ENCODE measurements at regions of chr4 and their contacts with region 1.

Region 1: DNA sequence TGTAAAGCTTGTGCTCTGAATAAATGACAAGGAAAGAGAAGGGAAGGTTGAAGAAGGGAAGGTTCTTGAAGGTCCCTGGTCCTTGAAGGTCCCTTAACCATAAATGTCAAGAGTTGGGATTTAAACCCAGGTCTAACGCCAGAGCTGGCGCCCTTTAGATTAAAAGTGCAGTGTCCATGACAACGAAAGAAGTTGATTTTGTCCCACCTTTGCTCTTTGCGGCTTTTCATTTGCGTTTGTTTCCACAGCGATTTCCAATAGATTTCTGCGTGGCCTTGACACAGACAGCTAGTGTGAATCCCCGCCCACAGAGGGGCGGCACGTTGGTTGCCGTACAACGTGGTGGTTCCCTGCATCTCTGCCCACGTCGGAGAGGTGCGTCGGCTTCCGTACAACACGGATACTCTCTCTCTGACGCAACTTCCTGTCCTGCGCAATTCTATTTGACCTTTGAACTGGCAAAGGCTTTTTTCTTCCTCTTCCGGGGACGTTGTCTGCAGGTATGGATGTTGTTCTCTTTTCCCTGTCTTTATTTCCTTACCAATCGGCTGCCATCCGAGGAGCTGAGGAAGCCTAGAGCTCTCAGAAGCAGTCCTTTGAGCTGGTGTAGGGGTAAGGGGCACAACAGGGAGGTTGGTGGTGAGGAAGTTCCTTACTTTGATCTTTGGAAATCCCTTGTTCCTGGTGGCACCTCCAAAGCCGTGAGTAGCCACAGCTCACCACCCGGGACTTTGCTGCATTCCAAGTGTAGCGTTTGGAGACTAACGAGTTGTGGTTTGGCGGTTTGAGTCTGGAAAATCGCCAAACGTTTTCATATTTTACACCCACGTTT is at the start of gene RPL34:
- H3K4me3 Mint-ChIP-seq: peak within 1 kb of the TSS; percentile 91
- H3K27ac Mint-ChIP-seq: peak within 1 kb of the TSS; percentile 95
- H3K4me1 Mint-ChIP-seq: peaks cover 39% of the 10 kb centered on the region
- H3K27me3 Mint-ChIP-seq: no peaks in the 10 kb centered on the region

Region 2: DNA sequence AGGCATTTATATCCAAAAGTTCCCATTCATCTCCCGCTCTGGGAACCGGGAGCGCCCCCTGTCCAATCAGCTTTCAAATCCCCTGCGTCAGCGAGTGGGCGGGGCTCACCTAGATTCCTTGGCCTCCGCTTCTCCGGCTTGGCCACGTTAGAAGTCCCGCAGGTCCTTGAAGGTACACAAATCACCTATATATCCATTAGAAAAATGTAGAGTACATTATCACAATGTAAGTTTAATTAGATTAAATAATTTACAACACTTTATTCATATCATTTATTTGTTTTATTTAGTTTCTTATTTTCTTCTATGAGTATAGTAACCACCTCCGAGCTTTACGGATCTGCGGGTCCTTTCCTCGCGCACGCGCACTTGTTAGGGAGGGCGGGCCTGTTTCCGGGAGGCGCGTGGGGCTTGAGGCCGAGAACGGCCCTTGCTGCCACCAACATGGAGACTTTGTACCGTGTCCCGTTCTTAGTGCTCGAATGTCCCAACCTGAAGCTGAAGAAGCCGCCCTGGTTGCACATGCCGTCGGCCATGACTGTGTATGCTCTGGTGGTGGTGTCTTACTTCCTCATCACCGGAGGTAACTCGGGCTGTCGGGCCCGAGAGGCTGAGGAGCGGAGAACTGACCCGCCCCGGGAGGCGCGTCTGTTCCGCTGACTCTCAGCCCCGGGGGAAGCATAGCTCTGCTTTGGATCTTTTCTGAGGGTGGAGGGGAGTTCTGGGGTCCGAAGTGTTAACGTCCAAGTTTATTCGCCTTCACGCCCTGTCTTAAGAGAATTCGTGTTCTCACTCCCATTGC is 30.1 kb after region 1 on chr4 and contains the start of gene OSTC:
- intact Hi-C with region 1: loop called (anchors 1 kb)
- H3K4me3 Mint-ChIP-seq: peak within 1 kb of the TSS; percentile 93
- H3K27ac Mint-ChIP-seq: peak within 1 kb of the TSS; percentile 96
- H3K4me1 Mint-ChIP-seq: peaks cover 27% of the 10 kb centered on the region
- H3K27me3 Mint-ChIP-seq: no peaks in the 10 kb centered on the region

Region 3: GRCh38 chr4:108751321-108751720 is 131.0 kb after region 1 on chr4:
- intact Hi-C with region 1: no loop called
- H3K4me3 Mint-ChIP-seq: no peak overlapping the region
- H3K27ac Mint-ChIP-seq: no peak overlapping the region
- H3K4me1 Mint-ChIP-seq: no peaks in the 10 kb centered on the region
- H3K27me3 Mint-ChIP-seq: peaks cover 5% of the 10 kb centered on the region

Region 4: GRCh38 chr4:108796173-108796572 is 175.9 kb after region 1 on chr4:
- intact Hi-C with region 1: no loop called
- H3K4me3 Mint-ChIP-seq: no peak overlapping the region
- H3K27ac Mint-ChIP-seq: no peak overlapping the region
- H3K4me1 Mint-ChIP-seq: no peaks in the 10 kb centered on the region
- H3K27me3 Mint-ChIP-seq: peaks cover 2% of the 10 kb centered on the region

Region 5: GRCh38 chr4:108840426-108840975 is 220.2 kb after region 1 on chr4:
- intact Hi-C with region 1: no loop called
- H3K4me3 Mint-ChIP-seq: no peak overlapping the region
- H3K27ac Mint-ChIP-seq: no peak overlapping the region
- H3K4me1 Mint-ChIP-seq: no peaks in the 10 kb centered on the region
- H3K27me3 Mint-ChIP-seq: no peaks in the 10 kb centered on the region

Region 6: DNA sequence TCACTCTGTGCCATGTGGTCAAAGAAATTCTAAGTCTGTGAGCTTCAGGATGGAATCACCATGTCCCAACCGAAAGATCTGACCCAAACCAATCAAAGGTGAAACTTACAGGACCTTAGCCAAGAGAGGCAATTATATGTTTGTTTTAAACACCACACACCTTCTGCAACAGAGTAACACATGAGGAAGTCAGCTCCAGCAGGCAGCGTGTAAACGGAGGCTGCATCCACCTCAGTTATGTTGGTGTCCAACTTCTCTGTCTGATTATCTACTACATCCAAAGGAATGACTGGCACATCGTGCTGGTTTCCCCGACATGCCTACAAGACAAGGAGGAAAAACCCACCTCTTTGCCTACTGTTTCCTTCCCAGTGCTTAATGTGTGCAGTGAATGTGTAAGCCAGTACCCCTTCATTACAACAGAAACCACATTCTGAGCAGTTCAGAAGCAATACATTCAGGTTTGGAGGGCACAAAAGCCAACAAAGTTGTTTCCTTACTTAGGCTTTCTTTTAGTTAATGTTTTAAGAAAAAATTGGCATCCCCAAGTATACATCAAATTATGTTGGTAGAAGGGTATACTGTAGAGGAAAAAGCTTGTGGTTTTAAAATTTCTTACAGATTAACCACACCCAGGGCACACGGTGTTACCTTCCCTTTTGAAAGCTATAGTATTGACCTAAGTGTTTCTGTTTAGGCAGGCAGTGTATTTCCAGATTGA is 1070.5 kb after region 1 on chr4:
- intact Hi-C with region 1: no loop called
- H3K4me3 Mint-ChIP-seq: no peak overlapping the region
- H3K27ac Mint-ChIP-seq: no peak overlapping the region
- H3K4me1 Mint-ChIP-seq: no peaks in the 10 kb centered on the region
- H3K27me3 Mint-ChIP-seq: no peaks in the 10 kb centered on the region